AG04450 (cell line): ENCODE measurements at regions of chr16 and their contacts with region 1.

Region 1: DNA sequence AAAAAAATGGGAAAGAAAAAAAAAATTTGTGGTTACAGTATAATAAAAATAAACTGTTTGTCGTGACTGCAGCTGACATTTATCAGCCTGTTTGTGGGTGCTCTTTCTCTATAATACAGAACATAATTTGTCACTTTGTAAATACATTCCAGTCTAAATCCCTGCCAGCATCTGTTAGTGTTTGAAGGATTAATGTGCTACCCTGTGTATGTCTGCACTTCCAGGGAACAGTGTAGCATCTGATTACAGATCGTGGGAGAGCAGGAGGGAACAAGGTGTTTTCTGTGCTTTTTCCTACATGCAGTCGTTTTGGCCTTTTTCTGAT is 265.1 kb downstream of the WWOX start:
- DNase-seq: no peak
- H3K4me3 ChIP-seq: no peak overlapping the region
- H3K27ac ChIP-seq: no peak overlapping the region
- H3K27me3 ChIP-seq: no peaks in the 10 kb centered on the region
- CTCF ChIP-seq: no peak

Region 2: GRCh38 chr16:78375055-78375679 is 10.6 kb after region 1 on chr16:
- CTCF ChIA-PET with region 1: no interaction called
- POLR2A ChIA-PET with region 1: no interaction called
- DNase-seq: no peak
- H3K4me3 ChIP-seq: no peak overlapping the region
- H3K27ac ChIP-seq: no peak overlapping the region
- H3K27me3 ChIP-seq: no peaks in the 10 kb centered on the region
- CTCF ChIP-seq: no peak

Region 3: GRCh38 chr16:79415983-79416640 is 1051.6 kb after region 1 on chr16:
- CTCF ChIA-PET with region 1: no interaction called
- POLR2A ChIA-PET with region 1: interaction called, 10 read pairs
- DNase-seq: no peak
- H3K4me3 ChIP-seq: no peak overlapping the region
- H3K27ac ChIP-seq: no peak overlapping the region
- H3K27me3 ChIP-seq: no peaks in the 10 kb centered on the region
- CTCF ChIP-seq: no peak